GM13976 (cell line): ENCODE measurements at regions of chr1 and their contacts with region 1.

Region 1: DNA sequence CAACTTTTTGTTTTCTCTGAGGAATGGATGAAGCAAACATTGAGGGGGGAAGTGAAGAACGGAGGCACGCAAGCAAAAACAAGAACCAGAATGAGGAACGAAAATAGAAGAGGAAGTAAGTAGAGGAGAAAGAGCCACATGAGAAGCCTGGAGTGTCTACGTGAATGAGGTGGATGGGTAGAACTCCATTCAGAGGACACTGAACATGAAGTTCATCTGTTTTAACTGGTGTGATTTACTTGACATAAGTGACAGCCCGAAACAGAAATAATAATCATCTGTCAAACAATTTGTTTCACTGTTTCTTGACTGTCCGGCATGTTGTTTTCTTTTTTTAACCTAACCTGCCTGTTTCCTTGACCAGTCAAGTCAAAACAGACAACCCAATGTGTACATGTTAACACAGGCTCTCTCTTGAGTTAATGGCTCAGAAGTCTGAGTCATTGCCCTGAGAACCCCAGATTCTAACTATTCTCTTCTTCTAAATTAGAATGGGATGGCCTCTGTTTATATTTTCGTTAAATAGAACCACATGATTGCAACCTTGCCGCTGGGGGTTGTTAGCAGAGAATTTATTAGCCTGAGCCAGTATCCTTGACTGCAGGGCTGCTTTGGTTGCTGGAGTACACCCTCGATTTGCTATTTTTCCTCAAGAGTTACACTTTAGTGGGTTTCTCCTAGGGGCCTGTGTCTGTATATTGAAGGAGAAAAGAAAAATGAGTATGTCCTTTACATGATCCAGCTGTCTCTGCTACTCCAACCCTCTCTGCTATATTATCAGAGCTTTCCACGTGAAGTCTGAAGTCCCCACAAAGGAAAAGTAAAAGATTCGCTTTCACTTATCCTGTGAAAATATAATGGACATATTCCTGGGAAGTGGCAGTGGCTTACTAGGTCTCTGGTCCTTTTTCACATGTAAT is 151.7 kb downstream of the ZC3H11B start:
- DNase-seq: peak; percentile 40
- CTCF ChIP-seq: no peak

Region 2: DNA sequence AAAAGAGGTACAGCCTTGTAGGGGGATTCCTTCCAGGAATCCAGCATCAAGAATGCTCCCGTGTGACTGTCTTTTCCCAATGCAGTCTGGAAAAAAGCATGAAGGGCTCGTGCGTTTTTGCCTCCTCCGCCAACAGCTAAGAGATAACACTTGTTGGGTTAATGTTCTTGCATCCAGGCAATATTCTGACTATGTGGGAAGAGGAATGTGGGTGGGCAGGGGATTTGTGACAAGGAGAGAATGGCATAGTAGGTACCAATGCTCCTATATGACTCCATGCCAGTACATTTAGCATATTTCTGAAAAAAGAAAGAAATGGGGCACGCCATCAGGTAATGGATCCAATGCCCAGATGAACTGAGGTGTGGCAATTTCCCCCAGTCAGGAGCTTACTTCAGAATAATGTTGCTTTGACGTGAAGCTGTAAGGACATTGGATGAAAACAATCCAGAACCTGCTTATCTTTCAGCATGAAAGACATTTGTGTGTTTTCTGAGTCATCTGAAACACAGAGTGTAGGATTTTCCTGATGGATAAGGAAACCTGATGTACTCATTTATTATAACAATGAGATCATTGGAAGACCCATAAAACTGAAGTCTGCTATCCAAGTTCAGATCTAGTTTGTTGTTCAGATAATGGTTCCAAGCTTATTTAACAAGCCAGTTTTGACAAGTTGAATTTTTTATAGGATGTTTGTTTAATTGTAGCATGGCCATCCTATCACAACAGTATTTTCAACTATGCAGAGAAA is 182.0 kb before region 1 on chr1:
- in situ Hi-C with region 1: no loop called
- DNase-seq: no peak
- CTCF ChIP-seq: no peak

Region 3: GRCh38 chr1:219405531-219406331 is 55.4 kb before region 1 on chr1:
- in situ Hi-C with region 1: no loop called
- DNase-seq: no peak
- CTCF ChIP-seq: no peak

Region 4: DNA sequence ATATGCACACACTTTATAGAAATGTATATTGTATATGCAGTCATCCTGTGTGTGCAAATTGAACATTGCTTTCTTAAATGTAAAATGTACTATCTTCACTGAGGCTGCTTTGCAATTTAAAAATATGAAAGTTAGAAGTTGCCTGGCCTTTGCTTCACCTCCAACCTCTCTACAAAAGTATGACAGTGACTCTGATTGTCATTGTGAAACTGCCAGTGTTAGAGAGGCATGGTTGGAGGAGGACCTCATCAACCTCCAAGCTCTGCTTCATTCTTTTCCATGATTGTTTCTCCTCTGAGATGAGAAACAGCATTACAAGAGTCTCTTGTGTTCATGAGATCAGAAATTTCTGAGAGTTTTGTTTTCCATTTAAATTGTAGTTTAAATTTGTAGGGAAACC is 33.8 kb before region 1 on chr1:
- in situ Hi-C with region 1: loop called (anchors 5 kb)
- DNase-seq: peak; percentile 9
- CTCF ChIP-seq: no peak

Region 5: DNA sequence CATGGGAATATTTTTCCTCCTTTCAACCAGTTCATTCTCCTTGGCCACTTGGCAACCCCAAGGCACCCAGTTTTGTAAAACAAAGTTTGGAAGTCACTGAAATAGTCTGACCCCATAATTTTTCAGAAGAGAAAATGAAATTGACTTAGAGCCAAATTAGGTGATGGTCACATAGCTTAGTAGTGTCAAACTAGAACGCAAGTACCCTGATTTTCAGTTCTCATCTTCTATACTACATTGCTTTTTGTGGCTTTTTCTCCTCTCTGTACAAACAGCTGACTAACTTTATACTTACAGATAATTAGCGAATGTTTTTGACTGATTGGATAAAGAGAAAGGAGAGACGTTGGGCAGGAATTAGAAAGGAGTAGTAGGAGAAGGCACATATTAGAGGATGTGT is 665.9 kb after region 1 on chr1:
- in situ Hi-C with region 1: no loop called
- DNase-seq: no peak
- CTCF ChIP-seq: no peak

Region 6: DNA sequence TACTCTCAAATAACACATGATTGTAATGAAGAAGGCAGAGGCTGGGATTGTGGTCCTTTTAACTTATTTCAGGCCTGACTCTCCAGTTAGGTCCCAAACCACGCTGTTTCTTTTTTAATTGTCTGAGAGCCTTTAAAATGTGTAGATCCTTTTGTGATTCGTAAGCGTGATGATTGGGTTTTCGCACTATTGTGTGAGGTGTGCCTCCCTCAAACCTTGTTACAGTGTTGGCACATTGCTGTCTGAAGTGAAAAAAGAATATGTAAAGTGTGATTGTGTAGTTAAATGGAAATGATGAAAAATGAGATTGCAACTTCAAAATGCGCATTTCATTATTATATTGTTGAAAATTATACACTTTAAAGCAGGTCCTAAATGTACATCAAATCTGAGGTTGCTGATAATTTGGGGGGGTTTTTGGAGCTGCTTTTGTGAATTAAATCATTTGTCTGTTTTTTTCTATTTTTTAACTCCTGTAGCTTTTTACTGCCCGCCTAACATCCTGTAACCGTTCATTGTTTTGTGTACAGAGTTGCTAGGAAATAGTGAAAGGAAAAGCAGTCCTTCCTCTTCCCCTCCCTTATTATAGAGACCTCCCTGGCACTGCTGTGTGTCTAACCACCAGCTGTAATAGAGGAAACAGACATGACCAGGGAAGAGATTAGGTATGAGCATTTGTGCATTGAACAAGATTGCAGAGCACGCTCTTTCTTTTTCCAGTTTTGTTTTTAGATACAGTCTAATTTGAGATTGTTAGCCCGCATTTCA is 676.0 kb after region 1 on chr1:
- in situ Hi-C with region 1: no loop called
- DNase-seq: no peak
- CTCF ChIP-seq: no peak